Mammary epithelial cell (primary cell): ENCODE measurements at regions of chr17 and their contacts with region 1.

Region 1: GRCh38 chr17:39996800-39997199 is 16.2 kb downstream of the PSMD3 start:
- DNase-seq: no peak
- H3K4me3 ChIP-seq: no peak overlapping the region
- H3K27ac ChIP-seq: no peak overlapping the region
- H3K4me1 ChIP-seq: no peaks in the 10 kb centered on the region
- H3K27me3 ChIP-seq: no peaks in the 10 kb centered on the region
- CTCF ChIP-seq: no peak

Region 2: DNA sequence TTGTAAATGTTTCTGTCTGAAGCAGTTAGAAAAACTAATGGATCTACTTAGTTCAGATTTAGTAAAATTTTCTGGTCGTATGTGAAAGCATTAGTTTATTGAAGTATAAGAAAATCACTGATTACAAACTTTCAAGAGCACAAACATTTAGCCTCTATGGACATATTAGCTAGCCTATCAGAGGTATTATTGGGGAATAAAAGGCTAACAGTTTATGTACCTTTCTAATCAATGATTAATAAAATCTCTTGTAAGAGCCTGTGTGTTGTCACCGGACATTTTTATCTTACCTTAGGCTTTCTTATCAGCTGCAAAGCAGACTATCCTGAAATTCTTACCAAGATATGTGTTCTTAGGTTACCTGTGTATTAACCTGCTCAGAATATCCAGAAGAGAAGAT is 107.6 kb before region 1 on chr17:
- CTCF ChIA-PET with region 1: no interaction called
- dilution Hi-C with region 1: loop called (anchors 5 kb)
- in situ Hi-C with region 1: no loop called
- intact Hi-C with region 1: no loop called
- DNase-seq: no peak
- H3K4me3 ChIP-seq: no peak overlapping the region
- H3K27ac ChIP-seq: no peak overlapping the region
- H3K4me1 ChIP-seq: no peaks in the 10 kb centered on the region
- H3K27me3 ChIP-seq: peaks cover 3% of the 10 kb centered on the region
- CTCF ChIP-seq: no peak

Region 3: GRCh38 chr17:39916918-39917317 is 79.9 kb before region 1 on chr17:
- CTCF ChIA-PET with region 1: no interaction called
- dilution Hi-C with region 1: loop called (anchors 5 kb)
- in situ Hi-C with region 1: no loop called
- intact Hi-C with region 1: no loop called
- DNase-seq: no peak
- H3K4me3 ChIP-seq: no peak overlapping the region
- H3K27ac ChIP-seq: no peak overlapping the region
- H3K4me1 ChIP-seq: no peaks in the 10 kb centered on the region
- H3K27me3 ChIP-seq: no peaks in the 10 kb centered on the region
- CTCF ChIP-seq: peak; percentile 10 to 22

Region 4: GRCh38 chr17:39952680-39953470 is 43.9 kb before region 1 on chr17:
- CTCF ChIA-PET with region 1: no interaction called
- dilution Hi-C with region 1: loop called (anchors 5 kb)
- in situ Hi-C with region 1: no loop called
- intact Hi-C with region 1: no loop called
- DNase-seq: peak; percentile 85
- H3K4me3 ChIP-seq: peak overlapping the region; percentile 8 to 55 (median 21)
- H3K27ac ChIP-seq: no peak overlapping the region
- H3K4me1 ChIP-seq: peaks cover 8% of the 10 kb centered on the region
- H3K27me3 ChIP-seq: no peaks in the 10 kb centered on the region
- CTCF ChIP-seq: no peak

Region 5: GRCh38 chr17:40032322-40033320 is 35.8 kb after region 1 on chr17:
- CTCF ChIA-PET with region 1: no interaction called
- dilution Hi-C with region 1: loop called (anchors 5 kb)
- in situ Hi-C with region 1: no loop called
- intact Hi-C with region 1: no loop called
- DNase-seq: no peak
- H3K4me3 ChIP-seq: no peak overlapping the region
- H3K27ac ChIP-seq: peak overlapping the region; percentile 0
- H3K4me1 ChIP-seq: peaks cover 21% of the 10 kb centered on the region
- H3K27me3 ChIP-seq: no peaks in the 10 kb centered on the region
- CTCF ChIP-seq: no peak

Region 6: GRCh38 chr17:40069751-40070708 is 73.2 kb after region 1 on chr17:
- CTCF ChIA-PET with region 1: no interaction called
- dilution Hi-C with region 1: loop called (anchors 5 kb)
- in situ Hi-C with region 1: no loop called
- intact Hi-C with region 1: no loop called
- DNase-seq: peak; percentile 24
- H3K4me3 ChIP-seq: no peak overlapping the region
- H3K27ac ChIP-seq: no peak overlapping the region
- H3K4me1 ChIP-seq: peaks cover 50% of the 10 kb centered on the region
- H3K27me3 ChIP-seq: no peaks in the 10 kb centered on the region
- CTCF ChIP-seq: peak; percentile 16 to 36

Region 7: GRCh38 chr17:40177275-40177874 is 180.6 kb after region 1 on chr17 and contains the start of gene RAPGEFL1:
- CTCF ChIA-PET with region 1: no interaction called
- dilution Hi-C with region 1: loop called (anchors 5 kb)
- in situ Hi-C with region 1: no loop called
- intact Hi-C with region 1: no loop called
- DNase-seq: peak; percentile 73
- H3K4me3 ChIP-seq: peak within 1 kb of the TSS; percentile 60 to 80 (median 65)
- H3K27ac ChIP-seq: peak within 1 kb of the TSS; percentile 85
- H3K4me1 ChIP-seq: peaks cover 47% of the 10 kb centered on the region
- H3K27me3 ChIP-seq: no peaks in the 10 kb centered on the region
- CTCF ChIP-seq: no peak
- total RNA-seq, gene RAPGEFL1: 19.7 to 25.2 TPM